A673 (cell line): ENCODE measurements at regions of chr7 and their contacts with region 1.

Region 1: GRCh38 chr7:35985126-35985754 is 167.8 kb upstream of the EEPD1 start:
- DNase-seq: peak; percentile 80
- H3K4me3 ChIP-seq: no peak overlapping the region
- H3K27ac ChIP-seq: no peak overlapping the region
- H3K4me1 ChIP-seq: no peaks in the 10 kb centered on the region
- H3K27me3 ChIP-seq: no peaks in the 10 kb centered on the region
- CTCF ChIP-seq: peak; percentile 93

Region 2: GRCh38 chr7:36291387-36292316 is 306.4 kb after region 1 on chr7:
- CTCF ChIA-PET with region 1: interaction called, 15 read pairs
- POLR2A ChIA-PET with region 1: no interaction called
- intact Hi-C with region 1: loop called (anchors 1 kb)
- DNase-seq: peak; percentile 91
- H3K4me3 ChIP-seq: peak overlapping the region; percentile 46
- H3K27ac ChIP-seq: peak overlapping the region; percentile 58
- H3K4me1 ChIP-seq: peaks cover 5% of the 10 kb centered on the region
- H3K27me3 ChIP-seq: no peaks in the 10 kb centered on the region
- CTCF ChIP-seq: peak; percentile 97

Region 3: GRCh38 chr7:36301914-36302771 is 316.9 kb after region 1 on chr7:
- CTCF ChIA-PET with region 1: interaction called, 4 read pairs
- POLR2A ChIA-PET with region 1: interaction called, 20 read pairs
- intact Hi-C with region 1: no loop called
- DNase-seq: peak; percentile 94
- H3K4me3 ChIP-seq: no peak overlapping the region
- H3K27ac ChIP-seq: peak overlapping the region; percentile 92
- H3K4me1 ChIP-seq: peaks cover 30% of the 10 kb centered on the region
- H3K27me3 ChIP-seq: no peaks in the 10 kb centered on the region
- CTCF ChIP-seq: no peak; the same call in 1 of the 2 replicates

Region 4: GRCh38 chr7:36315309-36316133 is 330.3 kb after region 1 on chr7:
- CTCF ChIA-PET with region 1: interaction called, 15 read pairs
- POLR2A ChIA-PET with region 1: no interaction called
- intact Hi-C with region 1: loop called (anchors 1 kb)
- DNase-seq: peak; percentile 54
- H3K4me3 ChIP-seq: no peak overlapping the region
- H3K27ac ChIP-seq: no peak overlapping the region
- H3K4me1 ChIP-seq: peaks cover 19% of the 10 kb centered on the region
- H3K27me3 ChIP-seq: no peaks in the 10 kb centered on the region
- CTCF ChIP-seq: no peak